Mammary epithelial cell (primary cell): ENCODE measurements at regions of chr15 and their contacts with region 1.

Region 1: DNA sequence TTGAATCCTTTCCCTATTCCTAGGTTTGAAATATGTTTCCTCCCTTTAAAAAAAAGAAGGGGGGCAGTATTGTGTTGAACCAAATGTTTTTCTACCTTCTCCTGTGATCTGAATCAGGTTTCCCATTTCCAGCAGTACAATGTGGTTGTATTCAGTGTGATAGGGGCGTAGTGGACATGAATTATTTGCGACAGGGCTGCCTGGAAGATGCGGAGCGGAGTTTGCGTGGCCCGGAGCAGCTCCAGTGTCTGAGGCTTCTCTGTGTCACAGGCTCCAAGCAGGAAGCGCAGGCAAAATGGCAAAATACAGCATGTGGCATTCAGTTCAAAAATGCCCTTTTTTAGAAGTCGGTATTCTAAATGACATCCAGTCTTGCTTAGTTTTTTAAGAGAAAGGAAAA is 154.4 kb downstream of the PGPEP1L start:
- DNase-seq: peak; percentile 90
- H3K4me3 ChIP-seq: peak overlapping the region; percentile 65 to 72 (median 70)
- H3K27ac ChIP-seq: peak overlapping the region; percentile 75
- H3K4me1 ChIP-seq: peaks cover 58% of the 10 kb centered on the region
- H3K27me3 ChIP-seq: no peaks in the 10 kb centered on the region
- CTCF ChIP-seq: no peak

Region 2: DNA sequence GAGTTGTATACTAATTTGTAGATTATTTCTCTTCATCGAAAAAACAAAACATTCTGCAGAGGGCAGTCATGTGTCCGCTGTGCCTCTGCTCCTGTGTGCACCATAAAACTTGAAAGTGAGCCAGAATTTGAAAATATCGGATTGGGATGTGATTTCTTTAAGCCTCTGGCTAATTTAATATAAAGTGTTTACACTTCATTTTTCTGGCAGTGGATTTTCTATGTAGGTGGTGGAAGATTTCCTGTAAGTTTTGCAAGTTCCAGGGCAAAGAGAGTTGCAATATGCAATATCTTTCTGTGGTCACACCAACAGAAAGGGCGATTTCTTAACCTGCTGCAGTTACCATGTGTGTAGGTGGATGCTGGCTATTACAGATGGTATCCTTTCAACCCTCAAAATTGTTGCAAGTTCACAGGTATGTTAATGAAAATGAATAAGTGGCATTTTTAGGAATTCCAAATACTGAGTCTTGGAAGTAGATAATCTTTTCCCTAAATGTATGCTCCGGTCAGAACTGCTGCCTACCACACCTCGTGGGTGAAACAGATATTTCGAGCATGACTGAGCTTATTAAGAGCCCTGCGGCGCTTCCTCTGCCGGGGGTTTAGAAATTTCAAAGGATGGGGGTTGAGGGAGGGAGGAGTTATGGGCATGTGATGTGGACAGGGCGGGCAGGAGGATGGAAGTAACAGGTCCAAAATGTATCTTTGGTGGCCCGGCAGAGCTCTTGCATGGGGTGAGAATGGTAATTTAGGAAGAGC is 20.5 kb after region 1 on chr15:
- CTCF ChIA-PET with region 1: interaction called, 4 read pairs
- dilution Hi-C with region 1: no loop called
- in situ Hi-C with region 1: no loop called
- intact Hi-C with region 1: loop called (anchors 1 kb)
- DNase-seq: peak; percentile 90
- H3K4me3 ChIP-seq: peak overlapping the region; percentile 19 to 36 (median 25)
- H3K27ac ChIP-seq: peak overlapping the region; percentile 90
- H3K4me1 ChIP-seq: peaks cover 44% of the 10 kb centered on the region
- H3K27me3 ChIP-seq: no peaks in the 10 kb centered on the region
- CTCF ChIP-seq: no peak

Region 3: GRCh38 chr15:98881526-98882520 is 28.7 kb after region 1 on chr15:
- CTCF ChIA-PET with region 1: interaction called, 5 read pairs
- dilution Hi-C with region 1: no loop called
- in situ Hi-C with region 1: no loop called
- intact Hi-C with region 1: loop called (anchors 1 kb)
- DNase-seq: peak; percentile 42
- H3K4me3 ChIP-seq: no peak overlapping the region
- H3K27ac ChIP-seq: no peak overlapping the region
- H3K4me1 ChIP-seq: peaks cover 4% of the 10 kb centered on the region
- H3K27me3 ChIP-seq: no peaks in the 10 kb centered on the region
- CTCF ChIP-seq: peak; percentile 59

Region 4: DNA sequence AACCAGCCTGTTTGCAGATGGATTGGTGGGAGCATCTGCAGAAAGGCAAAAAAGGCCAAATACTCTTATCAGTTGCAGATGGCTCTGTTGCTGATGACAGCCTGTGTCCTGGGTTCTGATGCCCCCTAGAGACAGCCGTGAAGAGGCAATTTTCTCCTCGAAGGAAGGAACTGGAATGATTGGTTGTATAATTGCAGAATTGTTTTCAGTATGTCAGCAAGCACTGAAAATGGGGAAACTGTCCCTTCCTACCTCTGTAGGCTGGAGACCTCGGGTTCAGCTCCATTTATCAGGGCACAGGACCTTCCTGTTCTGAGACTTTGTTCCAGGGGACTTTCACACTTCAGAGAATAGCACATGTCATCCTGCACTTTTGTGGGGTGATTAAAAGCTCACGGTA is 51.4 kb after region 1 on chr15:
- CTCF ChIA-PET with region 1: no interaction called
- dilution Hi-C with region 1: no loop called
- in situ Hi-C with region 1: no loop called
- intact Hi-C with region 1: loop called (anchors 1 kb)
- DNase-seq: peak; percentile 52
- H3K4me3 ChIP-seq: no peak overlapping the region
- H3K27ac ChIP-seq: peak overlapping the region; percentile 94
- H3K4me1 ChIP-seq: peaks cover 69% of the 10 kb centered on the region
- H3K27me3 ChIP-seq: no peaks in the 10 kb centered on the region
- CTCF ChIP-seq: peak; percentile 67 to 84